ENCODE measurements at regions of chr17 and their contacts with region 1.

Region 1: GRCh38 chr17:68318103-68318991 is 27.1 kb downstream of the ARSG start:
- DNase-seq: peak; percentile 92 to 99 (median 98)
- H3K4me3 ChIP-seq: peak overlapping the region in 1 of 3 experiments; percentile 5
- H3K4me3 Mint-ChIP-seq: no peak overlapping the region
- H3K27ac ChIP-seq: peak overlapping the region; percentile 69 to 97
- H3K27ac Mint-ChIP-seq: peak overlapping the region; percentile 90 to 96 (median 93)
- H3K4me1 ChIP-seq: peaks cover 63 to 69% of the 10 kb centered on the region in 2 donors
- H3K4me1 Mint-ChIP-seq: peaks cover 71% of the 10 kb centered on the region
- H3K27me3 ChIP-seq: no peaks in the 10 kb centered on the region
- H3K27me3 Mint-ChIP-seq: peaks cover 0 to 2% (median 1%) of the 10 kb centered on the region in 3 donors
- CTCF ChIP-seq: no peak

Region 2: GRCh38 chr17:67891581-67892054 is 426.7 kb before region 1 on chr17:
- intact Hi-C with region 1: no loop called
- DNase-seq: no peak
- H3K4me3 ChIP-seq: no peak overlapping the region
- H3K4me3 Mint-ChIP-seq: no peak overlapping the region
- H3K27ac ChIP-seq: no peak overlapping the region
- H3K27ac Mint-ChIP-seq: no peak overlapping the region
- H3K4me1 ChIP-seq: no peaks in the 10 kb centered on the region
- H3K4me1 Mint-ChIP-seq: no peaks in the 10 kb centered on the region
- H3K27me3 ChIP-seq: no peaks in the 10 kb centered on the region
- H3K27me3 Mint-ChIP-seq: no peaks in the 10 kb centered on the region
- CTCF ChIP-seq: no peak

Region 3: GRCh38 chr17:68247445-68248198 is 70.7 kb before region 1 on chr17 and contains the start of gene AMZ2:
- intact Hi-C with region 1: loop called in 1 of 2 experiments (anchors 5 kb)
- DNase-seq: peak; percentile 88 to 94 (median 94)
- H3K4me3 ChIP-seq: peak within 1 kb of the TSS; percentile 61 to 82 (median 77)
- H3K4me3 Mint-ChIP-seq: peak within 1 kb of the TSS; percentile 83 to 92
- H3K27ac ChIP-seq: peak within 1 kb of the TSS; percentile 97
- H3K27ac Mint-ChIP-seq: peak within 1 kb of the TSS; percentile 91 to 99 (median 97)
- H3K4me1 ChIP-seq: peaks cover 29 to 33% of the 10 kb centered on the region in 2 donors
- H3K4me1 Mint-ChIP-seq: peaks cover 30% of the 10 kb centered on the region
- H3K27me3 ChIP-seq: no peaks in the 10 kb centered on the region
- H3K27me3 Mint-ChIP-seq: peaks cover 2 to 10% (median 2%) of the 10 kb centered on the region in 3 donors
- CTCF ChIP-seq: no peak
- polyA plus RNA-seq, gene AMZ2: 34.0 to 67.6 (median 67.2) TPM

Region 4: DNA sequence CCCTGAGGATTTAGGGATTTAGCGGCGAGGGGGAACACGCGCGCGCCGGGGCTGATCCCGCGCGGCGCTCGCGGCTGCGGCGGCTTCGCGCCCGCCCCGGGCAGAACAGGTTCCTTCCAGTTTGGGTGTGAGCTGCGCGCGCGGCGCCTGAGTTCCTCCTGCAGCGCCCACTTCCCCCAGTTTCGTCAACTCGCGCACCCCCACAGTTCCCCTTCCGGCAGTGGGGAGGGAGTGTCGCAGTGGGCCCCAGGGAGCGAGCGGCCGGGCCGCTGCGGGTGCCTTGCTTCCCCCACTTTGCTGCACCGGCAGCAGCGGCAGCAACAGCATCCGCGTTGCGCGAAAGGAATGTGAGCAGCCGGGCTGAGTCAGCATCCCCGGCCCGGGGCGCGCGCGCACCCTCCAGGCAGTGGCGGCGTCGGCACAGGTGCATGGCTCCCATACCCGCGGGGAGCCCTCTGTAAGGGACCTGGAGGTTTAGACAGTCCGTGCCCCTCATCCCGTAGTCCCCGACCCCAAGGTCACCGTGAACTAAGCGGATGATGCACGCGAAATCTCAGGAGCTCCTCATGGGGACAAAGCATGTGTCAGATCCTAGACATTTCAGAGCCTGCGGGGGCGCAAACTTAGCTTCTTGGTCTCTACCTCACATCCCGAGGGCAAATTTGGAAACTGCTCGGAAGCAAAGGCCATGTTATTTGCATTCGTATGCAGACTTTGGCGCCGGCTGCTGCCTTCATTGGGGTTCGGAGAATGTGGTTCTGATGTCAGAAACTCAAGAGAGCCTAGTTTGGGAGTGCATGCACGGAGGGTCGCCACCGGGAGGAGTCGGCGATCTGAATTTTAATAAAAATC is 26.3 kb before region 1 on chr17:
- intact Hi-C with region 1: loop called (anchors 2 kb)
- DNase-seq: peak; percentile 96 to 99 (median 99)
- H3K4me3 ChIP-seq: peak overlapping the region; percentile 55 to 97 (median 87)
- H3K4me3 Mint-ChIP-seq: peak overlapping the region; percentile 77 to 87
- H3K27ac ChIP-seq: peak overlapping the region; percentile 96 to 97
- H3K27ac Mint-ChIP-seq: peak overlapping the region; percentile 91 to 97 (median 96)
- H3K4me1 ChIP-seq: peaks cover 76 to 82% of the 10 kb centered on the region in 2 donors
- H3K4me1 Mint-ChIP-seq: peaks cover 66% of the 10 kb centered on the region
- H3K27me3 ChIP-seq: no peaks in the 10 kb centered on the region
- H3K27me3 Mint-ChIP-seq: peaks cover 0 to 2% (median 2%) of the 10 kb centered on the region in 3 donors
- CTCF ChIP-seq: no peak

Region 5: DNA sequence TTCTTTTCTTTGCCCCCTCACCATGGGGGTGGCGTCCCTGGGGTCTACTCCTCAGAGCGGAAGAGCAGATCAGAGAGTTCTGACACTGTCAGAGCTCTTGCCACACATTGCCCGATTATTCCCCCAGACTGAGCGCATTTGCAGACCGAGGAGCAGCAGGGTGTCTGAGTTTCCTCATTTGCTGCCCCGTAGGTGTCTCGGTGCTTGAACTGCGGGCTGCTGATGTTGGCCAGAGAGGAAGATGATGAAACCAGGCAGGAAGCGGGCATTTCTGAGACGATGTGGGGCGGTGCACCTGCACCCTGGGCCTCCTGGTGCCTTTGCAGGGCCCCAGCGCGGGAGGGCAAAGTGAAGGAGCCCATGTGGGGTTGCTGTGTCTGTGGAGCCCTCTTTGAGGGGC is 28.1 kb after region 1 on chr17:
- intact Hi-C with region 1: loop called in 1 of 2 experiments (anchors 5 kb)
- DNase-seq: peak; percentile 89 to 94 (median 93)
- H3K4me3 ChIP-seq: peak overlapping the region in 1 of 3 experiments; percentile 55
- H3K4me3 Mint-ChIP-seq: peak overlapping the region; percentile 66 to 91
- H3K27ac ChIP-seq: peak overlapping the region; percentile 68 to 91
- H3K27ac Mint-ChIP-seq: peak overlapping the region; percentile 95 to 99 (median 98)
- H3K4me1 ChIP-seq: peaks cover 64 to 67% of the 10 kb centered on the region in 2 donors
- H3K4me1 Mint-ChIP-seq: peaks cover 63% of the 10 kb centered on the region
- H3K27me3 ChIP-seq: no peaks in the 10 kb centered on the region
- H3K27me3 Mint-ChIP-seq: peaks cover 0 to 2% (median under 1%) of the 10 kb centered on the region in 3 donors
- CTCF ChIP-seq: no peak

Region 6: GRCh38 chr17:68356520-68356919 is 38.2 kb after region 1 on chr17:
- intact Hi-C with region 1: loop called in 1 of 2 experiments (anchors 5 kb)
- DNase-seq: peak; percentile 51 to 71 (median 62)
- H3K4me3 ChIP-seq: peak overlapping the region in 1 of 3 experiments; percentile 42
- H3K4me3 Mint-ChIP-seq: peak overlapping the region; percentile 49 to 62
- H3K27ac ChIP-seq: peak overlapping the region; percentile 15 to 58
- H3K27ac Mint-ChIP-seq: peak overlapping the region in 6 of 7 donors; percentile 6 to 87 (median 77)
- H3K4me1 ChIP-seq: peaks cover 57 to 65% of the 10 kb centered on the region in 2 donors
- H3K4me1 Mint-ChIP-seq: peaks cover 69% of the 10 kb centered on the region
- H3K27me3 ChIP-seq: no peaks in the 10 kb centered on the region
- H3K27me3 Mint-ChIP-seq: peaks cover 0 to 6% (median 3%) of the 10 kb centered on the region in 3 donors
- CTCF ChIP-seq: no peak

Region 7: GRCh38 chr17:68377862-68378770 is 59.8 kb after region 1 on chr17:
- intact Hi-C with region 1: loop called in 1 of 2 experiments (anchors 2 kb)
- DNase-seq: peak; percentile 85 to 91 (median 91)
- H3K4me3 ChIP-seq: peak overlapping the region in 1 of 3 experiments; percentile 20
- H3K4me3 Mint-ChIP-seq: peak overlapping the region; percentile 62 to 86
- H3K27ac ChIP-seq: peak overlapping the region; percentile 72 to 83
- H3K27ac Mint-ChIP-seq: peak overlapping the region; percentile 92 to 99 (median 95)
- H3K4me1 ChIP-seq: peaks cover 26 to 35% of the 10 kb centered on the region in 2 donors
- H3K4me1 Mint-ChIP-seq: peaks cover 43% of the 10 kb centered on the region
- H3K27me3 ChIP-seq: no peaks in the 10 kb centered on the region
- H3K27me3 Mint-ChIP-seq: peaks cover 0 to 5% (median 2%) of the 10 kb centered on the region in 3 donors
- CTCF ChIP-seq: no peak